Body of pancreas (tissue), 4 donors: ENCODE measurements at regions of chr9 and their contacts with region 1.

Region 1: GRCh38 chr9:137286975-137287383 is 9.5 kb downstream of the TOR4A start:
- DNase-seq: peak; percentile 87 to 88 (median 87)
- ATAC-seq: peak; percentile 98
- H3K4me3 ChIP-seq: no peak overlapping the region
- H3K27ac ChIP-seq: no peak overlapping the region
- H3K4me1 ChIP-seq: no peaks in the 10 kb centered on the region
- H3K27me3 ChIP-seq: no peaks in the 10 kb centered on the region
- CTCF ChIP-seq: peak; percentile 57 to 94 (median 86)
- POLR2A ChIP-seq: no peak

Region 2: DNA sequence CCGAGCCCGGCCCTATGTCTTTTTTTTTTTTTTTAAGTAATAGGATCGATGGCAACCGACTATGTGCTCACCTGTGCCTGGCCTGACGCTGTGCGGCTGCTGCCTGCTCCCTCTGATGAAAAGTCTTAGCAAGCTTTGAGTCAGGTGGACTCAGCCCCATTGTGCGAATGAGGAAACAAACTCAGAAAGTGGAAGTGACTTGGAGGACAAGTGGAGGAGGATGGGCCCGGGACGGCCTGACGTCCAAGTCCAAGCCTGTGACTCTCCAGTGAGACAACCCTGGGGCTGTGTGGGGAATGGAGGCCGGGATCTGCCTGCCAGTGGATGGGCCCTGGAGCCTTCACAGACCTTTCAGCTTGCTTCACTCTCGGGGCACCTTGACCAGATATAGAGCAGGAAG is 78.1 kb after region 1 on chr9:
- intact Hi-C with region 1: no loop called
- DNase-seq: no peak
- ATAC-seq: no peak
- H3K4me3 ChIP-seq: no peak overlapping the region
- H3K27ac ChIP-seq: no peak overlapping the region
- H3K4me1 ChIP-seq: peaks cover 3% of the 10 kb centered on the region
- H3K27me3 ChIP-seq: no peaks in the 10 kb centered on the region
- CTCF ChIP-seq: no peak
- POLR2A ChIP-seq: no peak

Region 3: DNA sequence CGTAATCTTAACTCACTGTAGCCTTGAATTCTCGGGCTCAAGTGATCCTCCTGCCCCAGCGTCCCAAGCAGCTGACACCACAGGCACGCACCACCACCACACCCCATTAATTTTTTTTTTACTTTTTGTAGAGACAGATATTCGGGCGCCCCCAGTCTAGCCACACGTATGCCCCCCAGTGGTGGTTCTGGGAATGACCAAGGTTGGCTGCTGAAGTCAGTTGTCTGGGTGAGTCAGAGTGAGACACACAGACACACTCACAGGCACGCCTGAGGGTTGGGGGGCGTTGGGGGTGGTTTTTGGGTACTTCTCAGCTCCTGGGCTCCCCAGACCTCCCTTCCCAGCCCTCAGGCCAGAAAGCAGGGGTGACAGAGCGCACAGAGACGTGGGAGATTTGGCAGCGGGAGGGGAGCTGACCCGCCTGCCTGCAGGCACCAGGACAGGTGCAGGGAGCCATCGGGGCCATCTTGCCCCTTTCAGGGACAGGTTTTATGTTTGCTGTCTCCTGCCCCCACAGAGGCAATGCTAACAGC is 158.4 kb after region 1 on chr9:
- intact Hi-C with region 1: loop called (anchors 10 kb)
- DNase-seq: peak; percentile 83 to 88 (median 84)
- ATAC-seq: peak; percentile 81
- H3K4me3 ChIP-seq: no peak overlapping the region
- H3K27ac ChIP-seq: peak overlapping the region in 1 of 4 donors; percentile 44
- H3K4me1 ChIP-seq: peaks cover 18% of the 10 kb centered on the region
- H3K27me3 ChIP-seq: no peaks in the 10 kb centered on the region
- CTCF ChIP-seq: peak; percentile 75 to 94 (median 85)
- POLR2A ChIP-seq: peak in 1 of 3 donors; percentile 7

Region 4: GRCh38 chr9:137521405-137521985 is 234.5 kb after region 1 on chr9:
- intact Hi-C with region 1: loop called (anchors 10 kb)
- DNase-seq: peak; percentile 87 to 94 (median 93)
- ATAC-seq: peak; percentile 96
- H3K4me3 ChIP-seq: no peak overlapping the region
- H3K27ac ChIP-seq: peak overlapping the region; percentile 58 to 73 (median 60)
- H3K4me1 ChIP-seq: peaks cover 17% of the 10 kb centered on the region
- H3K27me3 ChIP-seq: no peaks in the 10 kb centered on the region
- CTCF ChIP-seq: no peak
- POLR2A ChIP-seq: no peak

Region 5: GRCh38 chr9:137590462-137591383 is 303.7 kb after region 1 on chr9 and contains the start of gene ZMYND19:
- intact Hi-C with region 1: no loop called
- DNase-seq: peak; percentile 90 to 92 (median 90)
- ATAC-seq: peak; percentile 96
- H3K4me3 ChIP-seq: peak within 1 kb of the TSS; percentile 26 to 62
- H3K27ac ChIP-seq: peak within 1 kb of the TSS; percentile 19 to 77 (median 52)
- H3K4me1 ChIP-seq: peaks cover 49% of the 10 kb centered on the region
- H3K27me3 ChIP-seq: no peaks in the 10 kb centered on the region
- CTCF ChIP-seq: no peak
- POLR2A ChIP-seq: peak in 2 of 3 donors; percentile 36 to 40
- total RNA-seq, gene ZMYND19: 6.6 to 8.8 TPM